Stomach (tissue), 19 donors: ENCODE measurements at regions of chr15 and their contacts with region 1.

Region 1: GRCh38 chr15:81274931-81275707 is 48.8 kb downstream of the STARD5 start:
- DNase-seq: peak; percentile 80 to 94
- H3K4me3 ChIP-seq: no peak overlapping the region
- H3K27ac ChIP-seq: peak overlapping the region in 3 of 5 donors; percentile 45 to 57 (median 53)
- H3K4me1 ChIP-seq: peaks cover 0 to 19% (median 12%) of the 10 kb centered on the region in 4 donors
- H3K27me3 ChIP-seq: no peaks in the 10 kb centered on the region
- CTCF ChIP-seq: peak in 5 of 7 experiments; percentile 82 to 94 (median 87)
- EP300 ChIP-seq: no peak
- POLR2A ChIP-seq: no peak

Region 2: GRCh38 chr15:81216422-81216821 is 58.7 kb before region 1 on chr15:
- intact Hi-C with region 1: no loop called
- DNase-seq: peak in 1 of 2 donors; percentile 27
- H3K4me3 ChIP-seq: no peak overlapping the region
- H3K27ac ChIP-seq: no peak overlapping the region
- H3K4me1 ChIP-seq: no peaks in the 10 kb centered on the region
- H3K27me3 ChIP-seq: peaks cover 0 to 6% (median 0%) of the 10 kb centered on the region in 3 donors
- CTCF ChIP-seq: no peak
- EP300 ChIP-seq: no peak
- POLR2A ChIP-seq: no peak

Region 3: GRCh38 chr15:81407718-81408117 is 132.6 kb after region 1 on chr15:
- intact Hi-C with region 1: loop called (anchors 5 kb)
- DNase-seq: no peak
- H3K4me3 ChIP-seq: no peak overlapping the region
- H3K27ac ChIP-seq: no peak overlapping the region
- H3K4me1 ChIP-seq: peaks cover 0 to 6% (median 0%) of the 10 kb centered on the region in 4 donors
- H3K27me3 ChIP-seq: peaks cover 0 to 18% (median 0%) of the 10 kb centered on the region in 3 donors
- CTCF ChIP-seq: no peak
- EP300 ChIP-seq: no peak
- POLR2A ChIP-seq: no peak

Region 4: DNA sequence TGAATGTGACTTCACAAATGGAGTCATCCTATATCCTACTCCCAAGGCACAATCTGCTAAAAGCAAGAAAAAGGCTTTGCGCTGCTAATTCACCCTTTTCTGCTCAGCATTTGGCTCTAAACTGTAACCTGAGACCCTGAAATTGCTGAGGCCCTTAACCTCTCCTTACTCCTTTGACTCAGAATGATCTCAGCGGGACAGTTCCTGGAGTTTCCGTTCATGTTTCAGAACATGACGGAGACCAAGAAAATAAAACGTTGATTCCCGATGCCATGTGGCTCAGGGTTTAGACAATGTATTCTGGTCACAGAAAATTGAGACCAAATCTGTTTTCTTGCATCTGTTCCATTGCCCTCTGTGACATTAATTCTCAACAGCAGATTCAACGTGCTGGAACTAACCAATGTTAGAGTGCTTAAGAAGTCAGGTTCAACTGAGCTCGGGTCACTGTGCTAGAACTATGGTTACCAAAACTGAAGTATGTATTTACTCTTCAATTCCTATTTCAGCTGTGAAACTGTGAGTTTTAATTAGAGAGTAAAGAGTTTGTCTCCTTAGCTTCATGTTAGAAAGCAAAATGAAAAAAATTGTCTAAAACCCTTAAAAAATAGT is 144.3 kb after region 1 on chr15:
- intact Hi-C with region 1: no loop called
- DNase-seq: no peak
- H3K4me3 ChIP-seq: no peak overlapping the region
- H3K27ac ChIP-seq: no peak overlapping the region
- H3K4me1 ChIP-seq: no peaks in the 10 kb centered on the region
- H3K27me3 ChIP-seq: no peaks in the 10 kb centered on the region
- CTCF ChIP-seq: no peak
- EP300 ChIP-seq: no peak
- POLR2A ChIP-seq: no peak